Mammary epithelial cell (primary cell): ENCODE measurements at regions of chr2 and their contacts with region 1.

Region 1: DNA sequence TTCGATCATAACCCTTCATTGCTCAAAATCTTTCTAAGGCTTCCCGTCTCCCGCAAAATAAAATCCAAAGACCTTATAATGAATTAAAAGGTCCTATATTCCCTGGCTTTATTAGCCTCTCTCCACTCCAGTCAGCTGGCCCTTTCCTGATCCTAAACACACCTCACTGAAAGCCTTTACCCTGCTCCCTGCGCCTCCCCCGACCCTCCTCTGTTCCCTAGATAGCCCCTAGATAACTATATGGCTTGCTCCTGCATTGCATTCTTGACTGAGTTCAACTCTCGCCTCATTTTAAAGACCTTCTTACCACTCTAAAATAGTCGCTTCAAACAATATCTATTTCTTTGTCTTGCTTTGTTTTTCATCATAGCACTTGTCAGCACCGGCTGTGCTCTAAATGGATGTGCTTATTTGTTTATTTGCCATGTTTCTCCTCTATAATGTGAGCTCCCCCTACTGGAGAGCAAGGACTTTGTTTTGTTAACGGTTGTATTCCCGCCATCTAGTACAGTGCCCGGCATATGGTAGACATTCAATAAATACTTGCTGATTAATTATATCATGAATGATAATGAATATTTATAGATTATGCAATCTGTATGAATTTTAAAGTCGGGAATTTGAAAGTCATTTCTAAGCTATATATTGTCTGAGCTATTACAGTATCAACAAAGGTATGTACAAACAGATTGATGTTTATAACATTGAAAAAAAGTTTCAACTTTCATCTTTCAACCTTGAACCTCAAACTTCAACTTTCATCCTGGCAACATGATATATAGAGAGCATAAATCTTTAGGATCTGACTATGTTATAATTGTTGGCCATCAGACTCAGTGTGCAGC is 32.4 kb upstream of the VIT start:
- DNase-seq: peak; percentile 49
- H3K4me3 ChIP-seq: no peak overlapping the region
- H3K27ac ChIP-seq: no peak overlapping the region
- H3K4me1 ChIP-seq: no peaks in the 10 kb centered on the region
- H3K27me3 ChIP-seq: no peaks in the 10 kb centered on the region
- CTCF ChIP-seq: peak; percentile 63 to 76

Region 2: GRCh38 chr2:35168354-35168753 is 1495.7 kb before region 1 on chr2:
- CTCF ChIA-PET with region 1: no interaction called
- dilution Hi-C with region 1: no loop called
- in situ Hi-C with region 1: no loop called
- intact Hi-C with region 1: loop called (anchors 5 kb)
- DNase-seq: no peak
- H3K4me3 ChIP-seq: no peak overlapping the region
- H3K27ac ChIP-seq: no peak overlapping the region
- H3K4me1 ChIP-seq: no peaks in the 10 kb centered on the region
- H3K27me3 ChIP-seq: no peaks in the 10 kb centered on the region
- CTCF ChIP-seq: peak in 1 of 2 donors; percentile 32

Region 3: GRCh38 chr2:36329746-36330472 is 334.2 kb before region 1 on chr2:
- CTCF ChIA-PET with region 1: no interaction called
- dilution Hi-C with region 1: no loop called
- in situ Hi-C with region 1: loop called in 1 of 2 experiments (anchors 25 kb)
- intact Hi-C with region 1: no loop called
- DNase-seq: peak; percentile 60
- H3K4me3 ChIP-seq: no peak overlapping the region
- H3K27ac ChIP-seq: peak overlapping the region; percentile 50
- H3K4me1 ChIP-seq: peaks cover 22% of the 10 kb centered on the region
- H3K27me3 ChIP-seq: no peaks in the 10 kb centered on the region
- CTCF ChIP-seq: no peak

Region 4: GRCh38 chr2:36556842-36557241 is 107.2 kb before region 1 on chr2:
- CTCF ChIA-PET with region 1: no interaction called
- dilution Hi-C with region 1: no loop called
- in situ Hi-C with region 1: no loop called
- intact Hi-C with region 1: loop called (anchors 2 kb)
- DNase-seq: no peak
- H3K4me3 ChIP-seq: no peak overlapping the region
- H3K27ac ChIP-seq: no peak overlapping the region
- H3K4me1 ChIP-seq: peaks cover 14% of the 10 kb centered on the region
- H3K27me3 ChIP-seq: no peaks in the 10 kb centered on the region
- CTCF ChIP-seq: no peak